GM12878 (cell line): ENCODE measurements at regions of chr6 and their contacts with region 1.

Region 1: GRCh38 chr6:150641398-150642139 is 41.9 kb downstream of the PLEKHG1 start:
- DNase-seq: no peak
- ATAC-seq: peak; percentile 62
- H3K4me3 ChIP-seq: peak overlapping the region; percentile 59
- H3K27ac ChIP-seq: peak overlapping the region; percentile 63
- H3K4me1 ChIP-seq: peaks cover 30% of the 10 kb centered on the region
- H3K27me3 ChIP-seq: no peaks in the 10 kb centered on the region
- CTCF ChIP-seq: no peak
- EP300 ChIP-seq: no peak
- POLR2A ChIP-seq: no peak
- RAD21 ChIP-seq: no peak

Region 2: GRCh38 chr6:150600301-150601017 is 41.1 kb before region 1 on chr6:
- CTCF ChIA-PET with region 1: interaction called, 15 read pairs
- POLR2A ChIA-PET with region 1: interaction called, 6 read pairs
- RAD21 ChIA-PET with region 1: interaction called, 73 read pairs
- SMC1A ChIA-PET with region 1: interaction called, 17 read pairs
- in situ Hi-C with region 1: no loop called
- intact Hi-C with region 1: loop called (anchors 1 kb)
- DNase-seq: no peak
- ATAC-seq: peak; percentile 84
- H3K4me3 ChIP-seq: peak overlapping the region; percentile 75
- H3K27ac ChIP-seq: no peak overlapping the region
- H3K4me1 ChIP-seq: peaks cover 4% of the 10 kb centered on the region; the same call in 1 of the 2 replicates
- H3K27me3 ChIP-seq: peaks cover 2 to 7% of the 10 kb centered on the region in 2 experiments
- CTCF ChIP-seq: peak; percentile 23 to 54 (median 54)
- EP300 ChIP-seq: no peak
- POLR2A ChIP-seq: peak; percentile 43; the same call in 1 of the 2 replicates
- RAD21 ChIP-seq: peak; percentile 45

Region 3: GRCh38 chr6:150661216-150662007 is 19.8 kb after region 1 on chr6:
- CTCF ChIA-PET with region 1: no interaction called
- POLR2A ChIA-PET with region 1: no interaction called
- RAD21 ChIA-PET with region 1: interaction called, 3 read pairs
- SMC1A ChIA-PET with region 1: interaction called, 10 read pairs
- in situ Hi-C with region 1: no loop called
- intact Hi-C with region 1: no loop called
- DNase-seq: no peak
- ATAC-seq: no peak
- H3K4me3 ChIP-seq: no peak overlapping the region
- H3K27ac ChIP-seq: no peak overlapping the region
- H3K4me1 ChIP-seq: no peaks in the 10 kb centered on the region
- H3K27me3 ChIP-seq: no peaks in the 10 kb centered on the region
- CTCF ChIP-seq: no peak
- EP300 ChIP-seq: no peak
- POLR2A ChIP-seq: no peak
- RAD21 ChIP-seq: no peak

Region 4: GRCh38 chr6:150881911-150882481 is 240.4 kb after region 1 on chr6:
- CTCF ChIA-PET with region 1: no interaction called
- POLR2A ChIA-PET with region 1: no interaction called
- RAD21 ChIA-PET with region 1: no interaction called
- SMC1A ChIA-PET with region 1: no interaction called
- in situ Hi-C with region 1: no loop called
- intact Hi-C with region 1: no loop called
- DNase-seq: no peak
- ATAC-seq: no peak
- H3K4me3 ChIP-seq: no peak overlapping the region
- H3K27ac ChIP-seq: no peak overlapping the region
- H3K4me1 ChIP-seq: no peaks in the 10 kb centered on the region
- H3K27me3 ChIP-seq: no peaks in the 10 kb centered on the region
- CTCF ChIP-seq: no peak
- EP300 ChIP-seq: no peak
- POLR2A ChIP-seq: no peak
- RAD21 ChIP-seq: no peak